ENCODE measurements at regions of chr12 and their contacts with region 1.

Region 1: DNA sequence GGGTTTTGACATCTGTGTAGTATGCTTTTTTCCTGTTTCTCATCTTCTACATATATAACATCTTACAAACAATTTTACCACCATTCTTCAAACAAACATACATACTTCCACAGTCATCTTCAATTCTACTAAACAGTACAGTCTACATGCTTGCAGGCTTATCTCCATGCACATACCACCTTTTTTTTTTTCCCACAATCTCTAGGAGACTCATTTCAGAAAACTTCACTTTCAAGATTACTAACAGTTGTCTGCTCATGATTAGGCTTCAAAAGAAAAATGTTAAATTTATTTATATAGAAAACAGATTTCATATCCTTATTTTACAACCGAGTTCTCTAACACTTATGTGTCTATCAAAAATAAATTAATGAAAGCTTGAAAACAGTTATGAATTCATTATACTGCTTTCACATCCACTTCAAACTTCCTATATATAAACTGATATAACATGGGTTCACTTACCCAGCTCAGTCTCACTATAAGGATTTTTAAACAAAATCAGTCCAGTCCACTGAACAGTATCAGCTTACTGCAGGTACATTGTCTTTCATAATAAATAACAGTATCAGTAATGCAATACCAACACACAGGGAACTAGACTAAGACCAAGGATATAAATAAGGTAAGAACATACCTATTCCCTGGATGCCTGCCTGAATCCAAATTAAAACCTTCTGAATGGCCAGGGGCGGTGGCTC is 42.5 kb downstream of the LRP6 start:
- DNase-seq: no peak
- ATAC-seq: peak; percentile 81
- H3K4me3 ChIP-seq: no peak overlapping the region
- H3K27ac ChIP-seq: no peak overlapping the region
- H3K4me1 ChIP-seq: peaks cover 8% of the 10 kb centered on the region
- H3K27me3 ChIP-seq: no peaks in the 10 kb centered on the region
- CTCF ChIP-seq: no peak
- EP300 ChIP-seq: peak; percentile 61 to 64; a peak in 2 of 4 replicates
- POLR2A ChIP-seq: no peak
- RAD21 ChIP-seq: no peak

Region 2: GRCh38 chr12:12239127-12239526 is 14.7 kb after region 1 on chr12:
- CTCF ChIA-PET with region 1: interaction called, 5 read pairs
- POLR2A ChIA-PET with region 1: no interaction called
- RAD21 ChIA-PET with region 1: no interaction called
- SMC1A ChIA-PET with region 1: interaction called, 14 read pairs
- in situ Hi-C with region 1: no loop called
- intact Hi-C with region 1: no loop called
- DNase-seq: no peak
- ATAC-seq: no peak
- H3K4me3 ChIP-seq: no peak overlapping the region
- H3K27ac ChIP-seq: no peak overlapping the region
- H3K4me1 ChIP-seq: no peaks in the 10 kb centered on the region
- H3K27me3 ChIP-seq: no peaks in the 10 kb centered on the region
- CTCF ChIP-seq: no peak
- EP300 ChIP-seq: no peak
- POLR2A ChIP-seq: no peak
- RAD21 ChIP-seq: no peak

Region 3: GRCh38 chr12:12265571-12266388 is 41.4 kb after region 1 on chr12:
- CTCF ChIA-PET with region 1: no interaction called
- POLR2A ChIA-PET with region 1: no interaction called
- RAD21 ChIA-PET with region 1: no interaction called
- SMC1A ChIA-PET with region 1: no interaction called
- in situ Hi-C with region 1: no loop called
- intact Hi-C with region 1: no loop called
- DNase-seq: no peak
- ATAC-seq: peak; percentile 26
- H3K4me3 ChIP-seq: peak overlapping the region; percentile 92
- H3K27ac ChIP-seq: no peak overlapping the region
- H3K4me1 ChIP-seq: no peaks in the 10 kb centered on the region
- H3K27me3 ChIP-seq: no peaks in the 10 kb centered on the region
- CTCF ChIP-seq: no peak
- EP300 ChIP-seq: no peak
- POLR2A ChIP-seq: no peak
- RAD21 ChIP-seq: no peak

Region 4: GRCh38 chr12:12305568-12306300 is 81.3 kb after region 1 on chr12:
- CTCF ChIA-PET with region 1: no interaction called
- POLR2A ChIA-PET with region 1: no interaction called
- RAD21 ChIA-PET with region 1: no interaction called
- SMC1A ChIA-PET with region 1: no interaction called
- in situ Hi-C with region 1: no loop called
- intact Hi-C with region 1: no loop called
- DNase-seq: no peak
- ATAC-seq: no peak
- H3K4me3 ChIP-seq: no peak overlapping the region
- H3K27ac ChIP-seq: no peak overlapping the region
- H3K4me1 ChIP-seq: no peaks in the 10 kb centered on the region
- H3K27me3 ChIP-seq: no peaks in the 10 kb centered on the region
- CTCF ChIP-seq: no peak
- EP300 ChIP-seq: no peak
- POLR2A ChIP-seq: no peak
- RAD21 ChIP-seq: no peak

Region 5: DNA sequence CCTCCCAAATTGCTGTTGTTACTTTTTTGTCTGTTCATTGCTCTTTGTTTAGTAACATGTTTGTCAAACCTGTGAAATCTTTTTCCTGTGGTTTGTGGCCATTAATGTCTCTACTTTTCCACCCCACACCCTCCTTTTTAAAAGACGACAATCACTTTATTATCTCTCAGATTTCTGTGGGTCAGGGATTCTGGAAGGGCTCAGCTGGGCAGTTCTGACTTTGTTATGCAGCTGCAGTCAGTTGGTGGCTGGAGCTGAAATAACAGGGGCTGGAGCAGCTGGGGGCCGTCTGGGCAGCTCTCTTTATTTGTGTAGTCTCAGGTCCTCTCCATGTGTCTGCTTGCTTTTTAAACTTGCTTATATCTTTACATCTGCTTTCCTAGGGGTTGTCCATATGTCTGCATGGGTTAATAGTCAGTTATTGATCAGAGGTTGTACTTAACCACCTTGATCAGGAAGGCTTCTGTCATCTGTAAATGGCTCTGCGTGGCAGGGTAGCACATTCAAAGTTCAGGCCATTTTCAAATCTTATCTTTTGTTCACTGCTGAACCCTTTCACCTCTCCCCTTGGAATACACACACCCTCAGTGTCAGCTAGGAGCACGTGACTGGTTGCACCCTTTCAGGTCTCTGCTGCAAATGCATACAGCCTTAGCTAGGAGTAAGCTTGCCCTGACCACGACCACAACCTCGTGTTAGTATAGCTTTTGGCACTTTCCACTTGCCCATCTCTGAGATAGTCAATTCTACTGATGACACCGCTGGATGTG is 160.4 kb after region 1 on chr12:
- CTCF ChIA-PET with region 1: no interaction called
- POLR2A ChIA-PET with region 1: no interaction called
- RAD21 ChIA-PET with region 1: no interaction called
- SMC1A ChIA-PET with region 1: no interaction called
- in situ Hi-C with region 1: no loop called
- intact Hi-C with region 1: no loop called
- DNase-seq: no peak
- ATAC-seq: peak; percentile 88
- H3K4me3 ChIP-seq: no peak overlapping the region
- H3K27ac ChIP-seq: no peak overlapping the region
- H3K4me1 ChIP-seq: peaks cover 7% of the 10 kb centered on the region
- H3K27me3 ChIP-seq: no peaks in the 10 kb centered on the region
- CTCF ChIP-seq: no peak
- EP300 ChIP-seq: 0 out of 4 replicates have a peak, but pooled peaks of 1 of the 2 experiments have one; percentile 11
- POLR2A ChIP-seq: no peak
- RAD21 ChIP-seq: no peak